IMR-90 (cell line): ENCODE measurements at regions of chr20 and their contacts with region 1.

Region 1: DNA sequence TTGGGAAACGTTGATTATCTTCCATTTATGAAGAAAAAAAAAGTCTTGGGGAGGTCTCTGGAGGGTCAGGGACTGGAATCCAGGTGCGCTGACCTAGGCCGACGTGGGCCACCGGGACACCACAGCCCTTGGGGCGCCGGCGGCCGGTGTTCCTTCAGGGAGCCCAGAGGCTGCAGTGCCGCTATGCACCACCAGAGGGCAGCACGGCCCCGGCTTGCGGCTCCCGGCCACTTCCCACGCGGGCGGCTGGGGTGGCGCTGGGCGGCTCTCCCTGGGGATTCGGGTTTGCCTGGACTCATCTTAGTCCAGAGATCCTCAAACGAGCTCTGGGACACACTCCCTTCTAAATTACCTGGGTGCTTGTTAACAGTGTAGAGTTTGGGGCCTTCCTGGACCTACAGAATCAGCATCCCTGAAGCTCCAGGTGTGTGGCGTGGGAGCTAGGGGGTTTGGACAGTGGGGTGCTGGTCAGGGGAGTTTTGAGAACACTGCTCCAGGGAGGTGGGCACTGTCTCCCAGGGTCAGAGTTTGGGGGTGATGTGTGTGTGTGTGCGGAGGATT is 23.0 kb upstream of the GTSF1L start:
- DNase-seq: peak; percentile 38
- ATAC-seq: peak; percentile 83
- H3K4me3 ChIP-seq: no peak overlapping the region
- H3K27ac ChIP-seq: no peak overlapping the region
- H3K4me1 ChIP-seq: peaks cover 14% of the 10 kb centered on the region
- H3K27me3 ChIP-seq: no peaks in the 10 kb centered on the region
- CTCF ChIP-seq: peak; percentile 98
- POLR2A ChIP-seq: no peak
- RAD21 ChIP-seq: peak; percentile 99

Region 2: GRCh38 chr20:43537921-43538877 is 211.6 kb before region 1 on chr20:
- CTCF ChIA-PET with region 1: no interaction called
- POLR2A ChIA-PET with region 1: no interaction called
- dilution Hi-C with region 1: no loop called
- in situ Hi-C with region 1: no loop called
- intact Hi-C with region 1: loop called (anchors 5 kb)
- DNase-seq: peak; percentile 60
- ATAC-seq: peak; percentile 96
- H3K4me3 ChIP-seq: no peak overlapping the region
- H3K27ac ChIP-seq: no peak overlapping the region
- H3K4me1 ChIP-seq: no peaks in the 10 kb centered on the region; the same call in 1 of the 2 replicates
- H3K27me3 ChIP-seq: no peaks in the 10 kb centered on the region; the same call in 1 of the 2 replicates
- CTCF ChIP-seq: peak; percentile 88
- POLR2A ChIP-seq: no peak
- RAD21 ChIP-seq: peak; percentile 83

Region 3: DNA sequence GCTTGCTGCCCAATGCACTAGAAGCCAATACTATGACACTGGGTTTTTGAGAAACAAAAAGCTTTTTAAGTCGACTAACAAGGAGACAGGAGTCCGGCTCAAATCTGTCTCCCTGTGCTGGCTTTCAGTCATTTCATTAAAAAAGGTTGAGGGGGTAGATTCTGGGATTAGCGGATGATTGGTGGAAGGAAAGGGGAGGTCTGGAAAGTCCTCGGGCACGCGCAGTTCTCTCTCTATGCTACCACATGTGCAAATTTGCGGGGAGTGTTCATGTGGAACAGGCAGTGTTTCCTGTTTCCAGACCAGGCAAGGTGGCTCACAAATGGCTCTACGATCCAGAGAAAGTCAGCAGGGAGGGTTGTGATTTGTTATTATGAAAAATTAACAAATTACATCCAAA is 75.8 kb after region 1 on chr20:
- CTCF ChIA-PET with region 1: no interaction called
- POLR2A ChIA-PET with region 1: no interaction called
- dilution Hi-C with region 1: no loop called
- in situ Hi-C with region 1: no loop called
- intact Hi-C with region 1: no loop called
- DNase-seq: no peak
- ATAC-seq: no peak
- H3K4me3 ChIP-seq: no peak overlapping the region
- H3K27ac ChIP-seq: no peak overlapping the region
- H3K4me1 ChIP-seq: no peaks in the 10 kb centered on the region
- H3K27me3 ChIP-seq: peaks cover 31% of the 10 kb centered on the region
- CTCF ChIP-seq: no peak
- POLR2A ChIP-seq: no peak
- RAD21 ChIP-seq: no peak

Region 4: GRCh38 chr20:43844778-43845614 is 95.2 kb after region 1 on chr20:
- CTCF ChIA-PET with region 1: interaction called, 3 read pairs
- POLR2A ChIA-PET with region 1: no interaction called
- dilution Hi-C with region 1: no loop called
- in situ Hi-C with region 1: no loop called
- intact Hi-C with region 1: loop called (anchors 2 kb)
- DNase-seq: peak; percentile 95
- ATAC-seq: peak; percentile 66
- H3K4me3 ChIP-seq: no peak overlapping the region
- H3K27ac ChIP-seq: no peak overlapping the region; the same call in 1 of the 2 replicates
- H3K4me1 ChIP-seq: peaks cover 20% of the 10 kb centered on the region
- H3K27me3 ChIP-seq: no peaks in the 10 kb centered on the region
- CTCF ChIP-seq: peak; percentile 49
- POLR2A ChIP-seq: no peak
- RAD21 ChIP-seq: peak; percentile 65

Region 5: GRCh38 chr20:43855803-43856202 is 106.0 kb after region 1 on chr20:
- CTCF ChIA-PET with region 1: interaction called, 10 read pairs
- POLR2A ChIA-PET with region 1: no interaction called
- dilution Hi-C with region 1: no loop called
- in situ Hi-C with region 1: no loop called
- intact Hi-C with region 1: no loop called
- DNase-seq: no peak
- ATAC-seq: no peak
- H3K4me3 ChIP-seq: no peak overlapping the region
- H3K27ac ChIP-seq: no peak overlapping the region
- H3K4me1 ChIP-seq: peaks cover 2% of the 10 kb centered on the region
- H3K27me3 ChIP-seq: no peaks in the 10 kb centered on the region
- CTCF ChIP-seq: no peak
- POLR2A ChIP-seq: no peak
- RAD21 ChIP-seq: no peak

Region 6: GRCh38 chr20:43914311-43915210 is 164.7 kb after region 1 on chr20 and contains the start of gene TOX2:
- CTCF ChIA-PET with region 1: interaction called, 4 read pairs
- POLR2A ChIA-PET with region 1: no interaction called
- dilution Hi-C with region 1: no loop called
- in situ Hi-C with region 1: loop called (anchors 10 kb)
- intact Hi-C with region 1: loop called (anchors 5 kb)
- DNase-seq: no peak
- ATAC-seq: peak; percentile 92
- H3K4me3 ChIP-seq: peak within 1 kb of the TSS; percentile 61
- H3K27ac ChIP-seq: peak within 1 kb of the TSS; percentile 89
- H3K4me1 ChIP-seq: peaks cover 7% of the 10 kb centered on the region; the same call in 1 of the 2 replicates
- H3K27me3 ChIP-seq: no peaks in the 10 kb centered on the region
- CTCF ChIP-seq: no peak
- POLR2A ChIP-seq: no peak
- RAD21 ChIP-seq: no peak
- total RNA-seq, gene TOX2: 1.1 and 1.3 TPM in 2 replicates

Region 7: GRCh38 chr20:43988867-43989266 is 239.1 kb after region 1 on chr20:
- CTCF ChIA-PET with region 1: no interaction called
- POLR2A ChIA-PET with region 1: no interaction called
- dilution Hi-C with region 1: no loop called
- in situ Hi-C with region 1: no loop called
- intact Hi-C with region 1: loop called (anchors 1 kb)
- DNase-seq: peak; percentile 55
- ATAC-seq: peak; percentile 67
- H3K4me3 ChIP-seq: no peak overlapping the region
- H3K27ac ChIP-seq: no peak overlapping the region
- H3K4me1 ChIP-seq: peaks cover 8% of the 10 kb centered on the region
- H3K27me3 ChIP-seq: no peaks in the 10 kb centered on the region
- CTCF ChIP-seq: peak; percentile 38
- POLR2A ChIP-seq: no peak
- RAD21 ChIP-seq: peak; percentile 53

Region 8: DNA sequence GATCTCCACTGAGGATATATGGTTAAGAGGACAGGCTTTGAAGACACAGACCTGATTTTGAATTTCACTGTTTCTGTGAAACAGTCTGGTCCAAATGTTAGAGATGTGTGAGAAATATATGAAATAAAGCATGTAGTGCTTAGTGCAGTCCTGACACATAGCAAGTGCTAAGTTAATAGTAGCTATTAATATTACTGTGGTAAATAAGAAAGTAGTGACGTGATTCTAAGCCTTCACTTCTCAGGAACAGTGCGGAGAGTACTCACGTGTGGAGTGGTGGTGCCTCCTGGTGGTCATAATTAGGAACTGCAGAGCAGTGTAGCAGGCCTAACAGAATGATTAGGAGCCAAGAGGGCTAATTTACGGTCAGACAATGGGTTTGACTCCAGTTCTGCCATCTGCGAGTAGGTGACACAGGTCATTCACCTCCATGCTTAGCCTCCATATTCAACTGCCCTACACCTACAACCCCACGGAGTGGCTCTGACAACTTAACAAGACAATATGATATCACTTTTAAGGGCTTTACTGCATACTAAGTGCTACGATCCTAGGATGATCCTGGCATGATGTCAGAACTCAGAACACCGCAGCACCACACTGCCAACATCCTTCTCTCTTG is 330.9 kb after region 1 on chr20:
- CTCF ChIA-PET with region 1: interaction called, 21 read pairs
- POLR2A ChIA-PET with region 1: interaction called, 3 read pairs
- dilution Hi-C with region 1: no loop called
- in situ Hi-C with region 1: loop called (anchors 5 kb)
- intact Hi-C with region 1: loop called (anchors 1 kb)
- DNase-seq: peak; percentile 76
- ATAC-seq: peak; percentile 98
- H3K4me3 ChIP-seq: no peak overlapping the region
- H3K27ac ChIP-seq: no peak overlapping the region
- H3K4me1 ChIP-seq: peaks cover 11% of the 10 kb centered on the region
- H3K27me3 ChIP-seq: no peaks in the 10 kb centered on the region
- CTCF ChIP-seq: peak; percentile 99
- POLR2A ChIP-seq: 0 out of 2 replicates have a peak, but pooled peaks have one; percentile 30
- RAD21 ChIP-seq: peak; percentile 100